GM10248 (cell line): ENCODE measurements at regions of chr10 and their contacts with region 1.

Region 1: GRCh38 chr10:96984541-96985131 is 152.5 kb downstream of the LCOR start:
- DNase-seq: peak; percentile 60
- CTCF ChIP-seq: no peak

Region 2: DNA sequence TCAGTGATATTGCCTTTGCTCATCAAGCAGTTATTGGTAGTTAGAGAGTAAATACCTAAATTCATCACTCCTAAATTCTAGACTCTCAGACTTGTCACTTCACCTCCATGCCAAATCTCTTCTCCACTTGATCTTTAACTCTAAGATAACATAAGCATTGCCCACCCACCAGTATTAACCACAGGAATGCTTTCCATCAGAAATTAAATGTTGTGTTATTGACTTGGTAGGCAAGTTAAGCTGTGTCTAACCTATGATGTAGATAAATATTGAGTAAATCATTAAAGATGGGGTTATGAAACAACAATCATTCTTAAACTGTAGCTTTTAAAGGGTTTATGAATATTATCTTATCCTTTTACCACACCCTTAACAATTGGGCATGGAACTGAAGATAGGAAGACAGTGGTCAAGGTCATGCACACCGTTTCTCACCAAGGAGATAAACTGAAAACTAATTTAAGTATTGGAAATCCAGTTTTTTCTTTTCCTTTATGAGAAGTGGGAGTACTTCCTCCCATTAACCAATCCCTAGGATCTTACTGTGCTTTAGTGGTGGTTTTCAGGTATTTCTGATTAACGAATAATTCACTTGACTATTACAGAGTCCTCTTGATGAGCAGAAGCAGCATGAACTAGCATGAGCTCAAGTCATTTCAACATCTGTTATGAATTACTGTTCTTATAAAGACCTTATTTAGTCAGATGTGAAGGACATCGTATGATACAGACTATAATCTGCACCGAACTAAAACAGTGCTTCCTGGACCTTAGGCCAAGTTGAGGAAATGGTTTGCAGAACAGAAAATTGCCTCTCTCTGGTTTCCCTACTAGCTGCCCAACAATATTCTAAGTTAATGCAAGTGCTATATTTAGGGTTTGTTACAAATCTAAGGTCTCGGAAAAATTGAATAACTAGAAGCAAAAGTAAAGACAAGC is 10.6 kb before region 1 on chr10:
- CTCF ChIA-PET with region 1: interaction called, 14 read pairs
- POLR2A ChIA-PET with region 1: no interaction called
- DNase-seq: no peak
- CTCF ChIP-seq: no peak

Region 3: GRCh38 chr10:97089209-97089870 is 104.7 kb after region 1 on chr10:
- CTCF ChIA-PET with region 1: no interaction called
- POLR2A ChIA-PET with region 1: no interaction called
- DNase-seq: no peak
- CTCF ChIP-seq: no peak

Region 4: GRCh38 chr10:97157578-97158095 is 173.0 kb after region 1 on chr10:
- CTCF ChIA-PET with region 1: no interaction called
- POLR2A ChIA-PET with region 1: no interaction called
- DNase-seq: peak; percentile 49
- CTCF ChIP-seq: no peak